ENCODE measurements at regions of chr5 and their contacts with region 1.

Region 1: DNA sequence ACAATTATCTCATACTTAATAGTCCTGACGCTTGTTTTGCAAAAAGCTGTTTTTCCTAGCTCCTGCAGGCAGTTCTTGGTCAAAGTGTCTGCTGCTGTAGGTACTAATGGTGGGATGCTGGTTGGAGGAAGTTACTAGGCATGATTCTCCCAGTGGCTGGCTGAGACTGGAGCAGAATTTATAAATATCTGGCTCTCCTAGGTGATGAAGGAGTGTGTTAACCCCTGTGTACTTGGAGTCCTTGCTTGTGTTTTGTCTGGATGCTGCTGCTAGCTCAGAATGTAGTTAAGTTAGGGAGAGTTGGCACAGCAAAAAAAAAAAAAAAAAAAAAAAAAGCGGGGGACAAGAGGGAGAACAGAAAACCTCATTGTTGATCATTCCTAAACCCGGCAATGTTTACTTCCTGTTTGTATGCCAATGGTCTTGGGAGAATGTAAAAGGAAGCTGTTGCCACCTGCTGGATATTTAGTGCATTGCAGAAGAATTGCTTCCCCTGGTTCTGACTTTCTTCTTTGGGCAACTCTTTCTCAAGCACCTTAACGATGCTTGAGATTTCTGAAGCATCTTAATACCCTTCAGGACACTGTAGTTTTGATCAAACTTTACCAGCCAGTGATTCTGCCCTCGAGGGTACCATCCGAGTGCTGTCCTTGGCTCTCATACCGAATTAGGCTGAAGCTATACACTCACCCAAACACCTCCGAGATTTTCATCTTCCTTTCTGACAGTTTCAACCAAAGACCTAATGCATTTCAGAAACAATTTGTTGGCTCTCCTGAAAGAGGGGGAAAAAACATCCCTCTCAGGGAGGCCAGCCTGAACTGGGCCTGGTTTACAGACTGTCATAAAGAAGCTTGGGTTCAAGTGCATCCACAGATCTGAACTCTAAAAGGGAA is 71.7 kb upstream of the WWC1 start:
- DNase-seq: peak; percentile 70 to 78 (median 74)
- ATAC-seq: peak; percentile 83
- H3K4me3 ChIP-seq: no peak overlapping the region
- H3K27ac ChIP-seq: no peak overlapping the region
- H3K4me1 ChIP-seq: no peaks in the 10 kb centered on the region
- H3K27me3 ChIP-seq: no peaks in the 10 kb centered on the region; a peak in 1 of 5 replicates
- CTCF ChIP-seq: peak; percentile 69 to 92 (median 81)
- EP300 ChIP-seq: no peak
- POLR2A ChIP-seq: no peak
- RAD21 ChIP-seq: peak; percentile 73 to 87

Region 2: DNA sequence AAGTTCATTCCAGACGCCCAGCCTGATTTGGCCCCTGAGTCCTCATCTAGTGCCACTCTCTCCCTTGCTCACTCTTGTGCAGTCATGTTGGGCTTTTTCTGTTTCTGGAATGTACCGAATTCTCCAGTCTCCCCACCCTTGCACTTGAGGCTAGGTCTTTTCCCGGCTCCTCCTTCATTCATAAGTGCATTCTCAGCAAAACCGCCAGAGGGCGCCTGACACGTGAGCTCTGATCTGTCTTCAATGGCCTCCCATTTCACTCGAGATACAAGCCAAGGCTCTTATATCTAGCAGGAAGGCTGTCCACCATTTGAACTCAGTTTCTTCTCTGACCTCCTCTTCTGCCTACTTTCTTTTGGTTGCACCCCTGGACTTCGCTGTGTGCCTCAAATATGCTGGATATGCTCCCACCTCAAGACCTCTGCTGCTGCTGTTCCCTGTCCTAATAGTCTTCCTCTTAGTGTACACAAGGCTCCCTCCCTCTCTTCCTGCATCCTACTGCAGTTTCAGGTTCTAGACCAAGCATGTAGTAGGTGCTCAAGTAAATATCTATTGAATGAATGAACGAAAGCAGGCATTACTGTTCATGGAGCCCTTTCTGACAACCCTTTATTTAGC is 496.4 kb before region 1 on chr5:
- CTCF ChIA-PET with region 1: no interaction called
- POLR2A ChIA-PET with region 1: no interaction called
- in situ Hi-C with region 1: loop called (anchors 10 kb)
- intact Hi-C with region 1: loop called (anchors 1 kb)
- DNase-seq: peak; percentile 56 to 76 (median 64)
- ATAC-seq: peak; percentile 88
- H3K4me3 ChIP-seq: no peak overlapping the region
- H3K27ac ChIP-seq: no peak overlapping the region
- H3K4me1 ChIP-seq: no peaks in the 10 kb centered on the region
- H3K27me3 ChIP-seq: no peaks in the 10 kb centered on the region
- CTCF ChIP-seq: peak; percentile 58 to 75 (median 63)
- EP300 ChIP-seq: no peak
- POLR2A ChIP-seq: no peak
- RAD21 ChIP-seq: peak; percentile 32 to 51; a peak in 3 of 4 replicates

Region 3: DNA sequence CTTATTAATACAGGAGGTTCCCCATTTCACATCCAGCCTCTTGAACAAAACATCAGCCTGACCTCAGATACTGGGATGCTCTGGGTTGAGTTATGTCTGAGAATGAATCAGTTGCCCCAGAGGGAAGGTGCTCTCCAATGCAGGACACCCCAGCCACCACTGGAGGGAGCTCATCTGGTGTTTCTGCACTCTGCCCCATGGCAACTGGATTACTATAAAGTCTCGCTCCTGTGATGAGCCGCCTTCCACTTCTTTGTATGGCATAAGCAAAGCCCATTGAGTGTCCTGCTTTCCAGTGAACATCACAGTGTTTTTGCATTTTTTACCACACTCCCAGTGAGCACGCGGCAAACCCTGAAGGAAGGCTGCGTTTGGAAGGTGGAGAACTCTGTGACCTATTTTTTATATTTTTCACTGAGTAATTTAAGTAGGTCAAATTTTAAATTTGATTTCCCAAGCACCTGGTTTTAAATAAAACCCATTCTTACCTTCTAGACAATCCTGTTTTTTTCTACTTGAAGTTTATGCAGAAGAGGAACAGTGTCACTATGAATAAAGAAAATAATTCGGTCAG is 105.2 kb before region 1 on chr5:
- CTCF ChIA-PET with region 1: no interaction called
- POLR2A ChIA-PET with region 1: no interaction called
- in situ Hi-C with region 1: no loop called
- intact Hi-C with region 1: loop called (anchors 1 kb)
- DNase-seq: peak; percentile 52 to 65 (median 58)
- ATAC-seq: peak; percentile 96
- H3K4me3 ChIP-seq: no peak overlapping the region
- H3K27ac ChIP-seq: no peak overlapping the region
- H3K4me1 ChIP-seq: no peaks in the 10 kb centered on the region
- H3K27me3 ChIP-seq: no peaks in the 10 kb centered on the region
- CTCF ChIP-seq: peak; percentile 66 to 78 (median 68)
- EP300 ChIP-seq: no peak
- POLR2A ChIP-seq: no peak
- RAD21 ChIP-seq: peak; percentile 18 to 50; a peak in 2 of 4 replicates

Region 4: DNA sequence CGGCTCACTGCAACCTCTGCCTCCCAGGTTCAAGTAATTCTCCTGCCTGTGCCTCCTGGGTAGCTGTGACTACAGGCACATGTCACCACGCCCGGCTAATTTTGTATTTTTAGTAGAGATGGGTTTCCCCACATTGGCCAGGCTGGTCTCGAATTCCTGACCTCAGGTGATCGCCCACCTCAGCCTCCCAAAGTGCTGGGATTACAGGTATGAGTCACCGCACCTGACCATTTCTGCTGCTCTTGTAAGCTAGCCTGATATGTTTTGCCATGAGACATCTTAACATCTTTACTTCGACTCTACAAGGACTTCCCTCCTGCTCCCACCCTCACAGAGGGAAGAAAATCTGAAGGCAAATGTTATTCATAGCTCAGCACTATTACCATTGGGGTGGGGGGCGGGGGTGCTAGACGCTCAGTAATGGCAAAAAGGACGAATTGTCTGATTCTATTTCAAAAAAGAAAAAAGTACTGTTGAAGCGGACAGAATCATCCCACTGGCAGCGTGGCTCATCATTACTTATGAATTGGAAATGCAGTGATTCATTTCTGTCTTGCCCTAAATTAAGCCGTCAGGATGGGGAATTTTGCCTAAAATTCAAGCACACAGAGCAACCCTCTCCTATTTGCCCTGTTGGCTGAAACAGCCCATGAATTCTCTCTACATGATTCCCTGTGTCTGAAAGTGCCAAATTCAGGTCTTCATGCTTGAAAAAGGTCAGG is 25.2 kb after region 1 on chr5:
- CTCF ChIA-PET with region 1: no interaction called
- POLR2A ChIA-PET with region 1: no interaction called
- in situ Hi-C with region 1: no loop called
- intact Hi-C with region 1: no loop called
- DNase-seq: no peak
- ATAC-seq: no peak
- H3K4me3 ChIP-seq: no peak overlapping the region
- H3K27ac ChIP-seq: no peak overlapping the region
- H3K4me1 ChIP-seq: no peaks in the 10 kb centered on the region
- H3K27me3 ChIP-seq: peaks cover 0 to 24% of the 10 kb centered on the region in 2 experiments; a peak in 2 of 5 replicates
- CTCF ChIP-seq: no peak
- EP300 ChIP-seq: no peak
- POLR2A ChIP-seq: no peak
- RAD21 ChIP-seq: no peak

Region 5: GRCh38 chr5:168346441-168346840 is 126.7 kb after region 1 on chr5:
- CTCF ChIA-PET with region 1: no interaction called
- POLR2A ChIA-PET with region 1: no interaction called
- in situ Hi-C with region 1: no loop called
- intact Hi-C with region 1: no loop called
- DNase-seq: no peak
- ATAC-seq: no peak
- H3K4me3 ChIP-seq: no peak overlapping the region
- H3K27ac ChIP-seq: no peak overlapping the region
- H3K4me1 ChIP-seq: no peaks in the 10 kb centered on the region
- H3K27me3 ChIP-seq: peaks cover 0 to 12% of the 10 kb centered on the region in 2 experiments; a peak in 2 of 5 replicates
- CTCF ChIP-seq: no peak
- EP300 ChIP-seq: no peak
- POLR2A ChIP-seq: no peak
- RAD21 ChIP-seq: no peak